ENCODE measurements at regions of chr1 and their contacts with region 1.

Region 1: DNA sequence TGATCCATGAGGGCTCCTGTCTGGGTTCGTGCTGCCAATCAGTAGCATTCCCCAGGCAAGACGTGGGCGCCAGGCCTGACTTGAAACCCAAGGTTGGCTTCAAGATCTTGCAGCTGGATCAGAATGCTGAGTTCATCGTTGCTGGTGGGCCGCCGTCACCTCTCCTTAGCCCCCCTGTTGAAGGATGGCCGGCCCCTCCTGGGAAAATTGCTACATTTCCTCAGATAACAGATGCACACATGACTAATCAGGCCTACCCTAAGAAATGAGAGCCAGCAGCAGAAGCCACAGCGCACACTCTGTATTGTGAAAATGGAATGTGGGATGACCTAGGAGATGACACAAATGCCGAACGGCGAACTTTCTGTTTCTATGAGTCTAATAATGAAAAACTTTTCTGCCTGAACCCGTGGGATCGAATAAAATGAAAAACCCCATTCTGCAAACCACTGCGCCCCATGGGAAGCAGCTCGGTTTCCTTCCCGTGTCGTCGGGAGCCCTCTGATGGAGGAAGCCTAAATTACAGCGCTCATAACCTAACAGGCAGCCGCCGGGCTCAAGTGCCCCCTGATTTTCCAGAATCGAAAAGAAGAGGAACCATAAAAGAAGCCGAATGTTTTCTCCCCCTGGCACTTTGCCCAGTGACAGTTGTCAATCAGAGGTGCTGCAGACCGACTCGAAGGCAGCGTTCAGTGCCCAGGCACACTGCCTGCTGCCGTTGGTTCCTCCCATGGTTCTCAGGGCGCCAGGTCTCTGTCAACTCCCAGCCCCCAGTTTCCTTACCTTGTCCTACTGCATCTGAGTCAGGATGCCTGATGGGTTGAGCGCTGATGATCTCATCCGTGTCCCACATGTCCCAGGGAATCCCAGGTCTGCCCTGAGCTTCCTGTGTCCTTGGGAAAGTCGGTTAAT is 38.2 kb upstream of the H6PD start:
- DNase-seq: peak; percentile 82
- H3K4me3 ChIP-seq: no peak overlapping the region
- H3K27ac ChIP-seq: peak overlapping the region; percentile 14 to 42 (median 25)
- H3K4me1 ChIP-seq: peaks cover 0 to 30% (median 20%) of the 10 kb centered on the region in 4 donors
- H3K27me3 ChIP-seq: peaks cover 3 to 27% (median 23%) of the 10 kb centered on the region in 3 donors
- CTCF ChIP-seq: peak; percentile 59 to 71 (median 68)
- EP300 ChIP-seq: no peak
- POLR2A ChIP-seq: no peak

Region 2: DNA sequence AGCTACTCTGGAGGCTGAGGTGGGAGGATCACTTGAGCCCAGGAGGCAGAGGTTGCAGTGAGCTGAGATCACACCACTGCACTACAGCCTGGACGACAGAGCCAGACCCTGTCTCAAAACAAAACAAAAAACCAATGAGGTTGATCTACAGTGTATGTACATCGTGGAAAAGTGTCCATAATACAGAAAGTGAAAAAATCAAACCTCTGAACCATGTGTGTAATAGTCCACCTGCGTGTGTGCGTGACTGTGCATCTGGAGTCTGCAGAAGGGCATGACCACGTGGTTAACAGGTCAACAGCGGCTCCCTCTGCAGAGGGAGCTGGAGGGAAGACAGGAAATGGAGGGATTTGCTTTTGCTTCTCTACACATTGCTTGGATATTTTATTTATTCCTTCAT is 285.5 kb before region 1 on chr1:
- intact Hi-C with region 1: loop called (anchors 10 kb)
- DNase-seq: no peak
- H3K4me3 ChIP-seq: no peak overlapping the region
- H3K27ac ChIP-seq: no peak overlapping the region
- H3K4me1 ChIP-seq: no peaks in the 10 kb centered on the region
- H3K27me3 ChIP-seq: no peaks in the 10 kb centered on the region
- CTCF ChIP-seq: no peak
- EP300 ChIP-seq: no peak
- POLR2A ChIP-seq: no peak

Region 3: DNA sequence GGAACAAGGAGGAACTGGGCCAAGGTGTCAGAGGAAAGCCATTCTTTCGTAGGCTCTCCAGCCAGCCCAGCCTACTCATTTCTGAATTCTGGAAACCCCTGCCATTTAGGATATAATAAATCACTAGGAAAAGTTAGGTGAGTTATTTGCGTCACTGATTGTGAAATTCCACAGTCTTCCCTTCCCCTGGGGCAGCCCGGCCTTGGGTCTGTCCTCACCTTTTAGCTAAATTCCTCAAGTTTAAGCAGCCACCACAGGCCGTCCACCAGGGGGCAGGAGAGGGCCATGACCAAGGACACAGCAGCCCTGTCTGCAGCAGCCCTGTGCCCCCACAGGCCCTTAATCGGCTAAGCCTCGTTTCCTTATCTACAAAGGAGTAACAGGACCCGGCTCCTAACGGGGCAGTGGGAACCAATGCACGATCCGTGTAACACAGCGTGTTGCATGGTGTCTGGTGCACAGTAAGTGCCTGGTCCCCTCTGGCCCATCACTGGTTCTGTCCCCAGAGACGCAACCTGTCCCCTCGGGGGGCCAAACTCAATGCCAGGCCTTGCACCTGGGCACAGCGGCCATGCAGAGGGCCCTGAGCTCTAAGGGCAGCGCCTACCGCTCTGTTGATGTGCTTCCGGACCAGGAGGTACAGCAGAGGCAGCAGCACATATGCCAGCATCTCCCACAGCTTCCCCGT is 85.6 kb before region 1 on chr1:
- intact Hi-C with region 1: loop called (anchors 2 kb)
- DNase-seq: peak; percentile 93
- H3K4me3 ChIP-seq: no peak overlapping the region
- H3K27ac ChIP-seq: no peak overlapping the region
- H3K4me1 ChIP-seq: peaks cover 0 to 9% (median 3%) of the 10 kb centered on the region in 4 donors
- H3K27me3 ChIP-seq: no peaks in the 10 kb centered on the region
- CTCF ChIP-seq: peak; percentile 82 to 97 (median 88)
- EP300 ChIP-seq: no peak
- POLR2A ChIP-seq: no peak

Region 4: GRCh38 chr1:9143250-9143649 is 53.1 kb before region 1 on chr1:
- intact Hi-C with region 1: loop called (anchors 2 kb)
- DNase-seq: no peak
- H3K4me3 ChIP-seq: no peak overlapping the region
- H3K27ac ChIP-seq: no peak overlapping the region
- H3K4me1 ChIP-seq: no peaks in the 10 kb centered on the region
- H3K27me3 ChIP-seq: no peaks in the 10 kb centered on the region
- CTCF ChIP-seq: no peak
- EP300 ChIP-seq: no peak
- POLR2A ChIP-seq: no peak

Region 5: GRCh38 chr1:9249534-9250410 is 53.4 kb after region 1 on chr1:
- intact Hi-C with region 1: no loop called
- DNase-seq: no peak
- H3K4me3 ChIP-seq: no peak overlapping the region
- H3K27ac ChIP-seq: peak overlapping the region; percentile 58 to 81 (median 64)
- H3K4me1 ChIP-seq: peaks cover 0 to 66% (median 56%) of the 10 kb centered on the region in 4 donors
- H3K27me3 ChIP-seq: no peaks in the 10 kb centered on the region
- CTCF ChIP-seq: peak in 3 of 4 experiments; percentile 21 to 44 (median 30)
- EP300 ChIP-seq: no peak
- POLR2A ChIP-seq: no peak

Measured in sigmoid colon (tissue), 7 donors.